SK-N-SH (cell line): ENCODE measurements at regions of chr15 and their contacts with region 1.

Region 1: GRCh38 chr15:40421246-40422157 is 15.9 kb downstream of the IVD start:
- DNase-seq: peak; percentile 91
- H3K4me3 ChIP-seq: peak overlapping the region in 1 of 2 experiments; percentile 39; a peak in 1 of 4 replicates
- H3K27ac ChIP-seq: no peak overlapping the region
- H3K4me1 ChIP-seq: peaks cover 0 to 20% of the 10 kb centered on the region in 2 experiments; a peak in 1 of 4 replicates
- H3K27me3 ChIP-seq: no peaks in the 10 kb centered on the region
- CTCF ChIP-seq: peak; percentile 92
- EP300 ChIP-seq: no peak
- RAD21 ChIP-seq: peak; percentile 93

Region 2: GRCh38 chr15:40307421-40308211 is 113.9 kb before region 1 on chr15 and contains the start of gene PLCB2:
- CTCF ChIA-PET with region 1: interaction called, 10 read pairs
- POLR2A ChIA-PET with region 1: no interaction called
- DNase-seq: no peak
- H3K4me3 ChIP-seq: no peak within 1 kb of the TSS
- H3K27ac ChIP-seq: no peak within 1 kb of the TSS
- H3K4me1 ChIP-seq: peaks cover 0 to 11% of the 10 kb centered on the region in 2 experiments; a peak in 1 of 4 replicates
- H3K27me3 ChIP-seq: no peaks in the 10 kb centered on the region; the same call in 1 of the 2 replicates
- CTCF ChIP-seq: peak; percentile 26; the same call in 1 of the 2 replicates
- EP300 ChIP-seq: no peak
- RAD21 ChIP-seq: no peak
- polyA plus RNA-seq, gene PLCB2: 0.15 TPM in 2 replicates

Region 3: GRCh38 chr15:40338041-40338657 is 83.4 kb before region 1 on chr15:
- CTCF ChIA-PET with region 1: interaction called, 299 read pairs
- POLR2A ChIA-PET with region 1: interaction called, 3 read pairs
- DNase-seq: peak; percentile 95
- H3K4me3 ChIP-seq: peak overlapping the region; percentile 51 to 77; a peak in 2 of 4 replicates
- H3K27ac ChIP-seq: peak overlapping the region; percentile 96 to 98; a peak in 3 of 4 replicates
- H3K4me1 ChIP-seq: peaks cover 56 to 62% of the 10 kb centered on the region in 2 experiments; a peak in 3 of 4 replicates
- H3K27me3 ChIP-seq: no peaks in the 10 kb centered on the region
- CTCF ChIP-seq: peak; percentile 89
- EP300 ChIP-seq: no peak
- RAD21 ChIP-seq: peak; percentile 81

Region 4: GRCh38 chr15:40367686-40368611 is 53.6 kb before region 1 on chr15:
- CTCF ChIA-PET with region 1: interaction called, 12 read pairs
- POLR2A ChIA-PET with region 1: no interaction called
- DNase-seq: peak; percentile 88
- H3K4me3 ChIP-seq: no peak overlapping the region; a peak in 1 of 4 replicates
- H3K27ac ChIP-seq: no peak overlapping the region; a peak in 1 of 4 replicates
- H3K4me1 ChIP-seq: peaks cover 0 to 17% of the 10 kb centered on the region in 2 experiments; a peak in 1 of 4 replicates
- H3K27me3 ChIP-seq: no peaks in the 10 kb centered on the region
- CTCF ChIP-seq: peak; percentile 52
- EP300 ChIP-seq: peak in 1 of 2 experiments; percentile 15; a peak in 1 of 4 replicates
- RAD21 ChIP-seq: peak; percentile 29

Region 5: GRCh38 chr15:40382580-40383456 is 38.7 kb before region 1 on chr15 and contains the start of gene KNSTRN:
- CTCF ChIA-PET with region 1: interaction called, 18 read pairs
- POLR2A ChIA-PET with region 1: no interaction called
- DNase-seq: peak; percentile 95
- H3K4me3 ChIP-seq: peak within 1 kb of the TSS; percentile 77 to 93
- H3K27ac ChIP-seq: peak within 1 kb of the TSS; percentile 20 to 66; a peak in 3 of 4 replicates
- H3K4me1 ChIP-seq: peaks cover 7 to 17% of the 10 kb centered on the region in 2 experiments; a peak in 3 of 4 replicates
- H3K27me3 ChIP-seq: no peaks in the 10 kb centered on the region
- CTCF ChIP-seq: no peak
- EP300 ChIP-seq: no peak
- RAD21 ChIP-seq: no peak
- polyA plus RNA-seq, gene KNSTRN: 25.5 and 29.5 TPM in 2 replicates

Region 6: DNA sequence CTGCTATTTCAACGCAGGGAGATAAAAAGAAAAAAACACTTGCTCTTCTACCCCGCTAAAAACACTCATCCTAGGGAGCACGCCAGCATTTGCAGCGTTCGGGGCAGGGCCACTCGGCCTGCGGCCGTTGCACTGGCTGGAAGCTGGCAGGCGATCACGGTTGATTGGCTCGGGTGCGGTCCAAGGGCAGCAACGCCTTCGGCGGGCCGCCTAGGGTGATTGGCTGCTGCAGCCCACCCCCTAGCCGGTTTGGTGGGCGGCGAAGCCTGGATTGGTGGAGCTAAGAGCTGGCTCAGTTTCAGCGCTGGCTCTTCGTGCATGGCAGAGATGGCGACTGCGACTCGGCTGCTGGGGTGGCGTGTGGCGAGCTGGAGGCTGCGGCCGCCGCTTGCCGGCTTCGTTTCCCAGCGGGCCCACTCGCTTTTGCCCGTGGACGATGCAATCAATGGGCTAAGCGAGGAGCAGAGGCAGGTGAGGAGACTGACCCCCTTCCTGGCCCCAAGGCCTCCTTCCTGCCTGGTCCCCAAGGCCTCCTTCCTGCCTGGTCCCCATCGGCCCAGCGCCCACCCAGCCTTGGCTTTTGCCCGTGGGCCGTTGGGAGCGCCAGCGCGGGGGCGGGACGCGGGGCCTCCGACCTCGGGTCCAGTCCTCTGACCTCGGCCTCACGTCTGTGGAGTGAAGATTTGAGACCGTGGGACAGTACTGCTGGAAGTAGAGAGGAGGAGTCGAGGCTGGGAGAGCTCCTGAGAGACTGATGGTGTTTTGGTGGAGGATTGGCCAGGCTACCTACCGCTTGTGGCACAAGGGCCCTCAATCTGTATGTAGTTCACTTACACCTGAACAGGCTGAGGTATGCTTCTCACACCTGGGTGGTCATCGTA is 15.8 kb before region 1 on chr15 and contains the start of gene IVD:
- CTCF ChIA-PET with region 1: interaction called, 16 read pairs
- POLR2A ChIA-PET with region 1: interaction called, 3 read pairs
- DNase-seq: peak; percentile 100
- H3K4me3 ChIP-seq: peak within 1 kb of the TSS; percentile 82 to 99
- H3K27ac ChIP-seq: peak within 1 kb of the TSS; percentile 44 to 80
- H3K4me1 ChIP-seq: peaks cover 9 to 13% of the 10 kb centered on the region in 2 experiments; a peak in 1 of 4 replicates
- H3K27me3 ChIP-seq: no peaks in the 10 kb centered on the region
- CTCF ChIP-seq: no peak
- EP300 ChIP-seq: no peak
- RAD21 ChIP-seq: 0 out of 2 replicates have a peak, but pooled peaks have one; percentile 8
- polyA plus RNA-seq, gene IVD: 54.2 and 73.8 TPM in 2 replicates